ENCODE measurements at regions of chr17 and their contacts with region 1.

Region 1: DNA sequence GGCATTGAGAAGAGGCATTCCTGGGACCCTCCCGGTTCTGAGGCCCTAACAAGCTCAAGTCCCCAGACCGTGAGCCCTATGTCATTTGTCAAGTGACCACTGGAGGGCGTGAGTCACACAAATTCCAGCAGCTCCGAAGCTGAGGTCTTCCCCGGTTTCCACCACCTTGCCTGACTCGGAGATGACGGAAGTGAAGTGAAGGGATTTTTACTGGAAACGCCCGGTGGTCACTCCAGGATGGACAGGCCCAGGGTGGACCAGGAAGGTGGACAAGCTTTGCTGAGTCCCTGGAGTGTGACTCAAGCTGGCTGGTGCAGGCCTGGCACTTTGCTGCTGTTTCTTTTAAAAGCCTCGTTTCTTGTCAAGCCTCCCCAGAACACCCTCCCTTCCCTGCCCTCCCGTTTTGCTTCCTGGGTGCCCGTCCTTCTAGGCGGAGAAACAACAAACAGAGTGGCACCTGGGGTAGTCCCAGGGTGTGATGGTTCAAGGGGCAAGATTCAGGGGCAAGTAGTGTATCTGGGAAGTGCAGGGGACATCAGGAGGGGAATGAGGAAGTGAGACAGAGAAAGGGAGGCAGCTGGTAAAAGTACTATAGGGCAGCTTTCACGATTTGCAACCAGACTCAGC is 5.3 kb upstream of the NOS2 start:
- DNase-seq: peak; percentile 82
- CTCF ChIP-seq: peak; percentile 82

Region 2: DNA sequence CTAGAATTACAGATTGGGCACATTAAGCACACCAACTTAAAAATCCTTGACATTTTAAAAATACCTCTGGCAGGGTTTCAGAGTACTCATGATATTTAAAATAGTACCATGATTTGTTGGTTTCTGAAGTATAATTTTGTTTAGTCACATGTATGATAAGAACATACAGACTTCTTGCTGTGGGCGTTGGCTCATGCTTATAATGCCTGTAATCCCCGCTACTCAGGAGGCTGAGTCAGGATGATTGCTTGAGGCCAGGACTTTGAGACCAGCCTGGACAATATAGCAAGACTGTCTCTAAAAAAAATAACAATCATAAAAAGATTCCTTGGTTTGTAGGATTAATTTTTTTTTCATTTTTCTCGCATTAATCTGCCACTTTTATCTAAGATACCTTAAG is 83.8 kb before region 1 on chr17:
- CTCF ChIA-PET with region 1: no interaction called
- POLR2A ChIA-PET with region 1: no interaction called
- DNase-seq: no peak
- CTCF ChIP-seq: no peak

Region 3: GRCh38 chr17:27793168-27793905 is 12.3 kb before region 1 on chr17:
- CTCF ChIA-PET with region 1: interaction called, 20 read pairs
- POLR2A ChIA-PET with region 1: no interaction called
- DNase-seq: no peak
- CTCF ChIP-seq: no peak

Region 4: GRCh38 chr17:27825459-27825858 is 19.8 kb after region 1 on chr17:
- CTCF ChIA-PET with region 1: interaction called, 15 read pairs
- POLR2A ChIA-PET with region 1: no interaction called
- DNase-seq: no peak
- CTCF ChIP-seq: no peak

Region 5: GRCh38 chr17:27846042-27846655 is 40.5 kb after region 1 on chr17:
- CTCF ChIA-PET with region 1: interaction called, 25 read pairs
- POLR2A ChIA-PET with region 1: no interaction called
- DNase-seq: no peak
- CTCF ChIP-seq: no peak

Region 6: DNA sequence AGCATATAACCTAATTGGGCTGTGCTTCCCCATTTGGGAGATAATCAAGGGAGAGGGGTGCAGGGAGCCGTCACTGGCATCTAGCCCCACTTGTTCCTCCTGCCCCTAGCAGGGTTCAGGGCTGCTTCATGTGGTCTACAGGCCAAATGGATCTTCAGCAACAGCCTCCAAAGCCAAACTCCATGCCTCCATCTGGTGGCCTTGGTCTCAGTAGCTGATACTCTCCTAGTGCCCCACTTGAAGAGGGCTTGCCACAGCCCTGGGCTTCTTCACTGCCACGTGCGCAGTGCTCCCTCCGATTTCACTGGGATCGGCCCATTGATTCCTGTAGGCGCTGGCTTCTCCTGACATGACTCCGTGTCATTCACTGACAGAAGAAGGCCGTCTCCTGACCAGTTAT is 62.9 kb after region 1 on chr17:
- CTCF ChIA-PET with region 1: interaction called, 560 read pairs
- POLR2A ChIA-PET with region 1: no interaction called
- DNase-seq: no peak
- CTCF ChIP-seq: peak; percentile 16

Region 7: DNA sequence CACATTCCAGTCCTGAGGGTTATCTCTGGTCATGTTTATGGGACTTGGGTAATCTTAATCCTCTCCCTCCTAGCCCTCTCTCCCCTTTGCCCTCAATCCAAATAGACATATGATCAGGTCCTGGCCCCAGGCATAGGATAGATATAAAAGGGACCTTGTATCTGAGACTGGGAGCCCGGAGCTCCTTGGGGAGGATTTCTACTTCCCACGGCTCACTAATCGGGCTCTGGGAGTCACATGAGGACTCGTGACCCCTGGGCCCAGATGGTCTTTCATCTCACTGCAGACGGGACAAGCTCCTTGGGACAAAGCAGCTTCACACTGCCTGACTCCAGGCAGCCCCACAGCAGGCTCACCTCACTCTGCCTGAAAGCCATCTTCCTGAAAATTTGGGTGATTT is 145.4 kb after region 1 on chr17:
- CTCF ChIA-PET with region 1: no interaction called
- POLR2A ChIA-PET with region 1: no interaction called
- DNase-seq: no peak
- CTCF ChIP-seq: no peak

Region 8: DNA sequence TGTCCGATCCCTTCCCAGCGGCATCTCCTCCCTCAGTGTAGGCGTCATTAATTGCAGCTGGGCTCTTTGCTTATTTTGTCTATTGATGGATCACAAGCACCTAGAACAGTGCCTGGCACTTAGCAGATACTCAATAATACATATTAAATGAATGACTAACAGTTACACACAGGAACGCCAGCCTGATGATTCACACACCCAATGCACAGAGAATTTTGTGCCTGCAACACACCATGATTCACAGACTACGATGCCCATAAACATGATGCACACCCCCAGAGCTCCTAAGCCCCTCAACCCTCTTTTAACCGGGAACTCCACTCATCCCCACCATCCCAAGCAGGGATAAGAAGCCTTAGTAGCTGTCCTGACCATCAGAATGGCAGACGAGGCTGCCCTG is 446.8 kb after region 1 on chr17:
- CTCF ChIA-PET with region 1: interaction called, 26 read pairs
- POLR2A ChIA-PET with region 1: no interaction called
- DNase-seq: no peak
- CTCF ChIP-seq: no peak